ENCODE measurements at regions of chr1 and their contacts with region 1.

Region 1: DNA sequence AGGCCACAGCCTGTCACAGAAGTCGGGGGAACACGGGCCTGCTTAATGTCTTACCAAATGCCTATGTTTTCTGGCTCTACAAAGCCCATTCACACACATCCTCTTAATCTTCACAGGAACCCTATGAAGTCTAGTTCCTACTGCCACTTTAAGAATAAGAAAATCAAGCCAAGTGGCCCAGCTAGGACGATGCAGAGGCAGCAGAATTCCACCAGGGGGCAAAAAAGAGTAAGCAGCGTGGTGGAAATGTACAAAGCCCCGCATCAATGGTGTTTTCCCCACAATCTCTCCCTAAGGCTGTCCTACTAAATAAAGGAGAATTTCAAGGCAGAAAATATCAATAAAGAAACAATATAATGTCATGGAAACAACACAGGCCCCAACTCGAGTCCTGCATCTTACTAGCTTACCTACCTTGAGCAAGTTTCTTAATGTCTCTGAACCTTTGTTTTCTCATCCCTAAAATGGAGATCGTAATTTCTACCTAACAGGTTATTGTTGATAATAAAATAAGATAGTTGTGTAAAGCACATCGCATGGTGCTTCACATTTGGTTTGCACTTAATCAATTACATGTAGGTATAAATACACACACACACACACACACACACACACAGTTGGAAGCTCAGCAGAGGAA is 21.4 kb downstream of the SEC16B start:
- DNase-seq: peak; percentile 58
- H3K4me3 ChIP-seq: no peak overlapping the region
- H3K27ac ChIP-seq: no peak overlapping the region
- H3K4me1 ChIP-seq: peaks cover 9% of the 10 kb centered on the region
- H3K27me3 ChIP-seq: no peaks in the 10 kb centered on the region
- CTCF ChIP-seq: peak; percentile 94 to 96

Region 2: DNA sequence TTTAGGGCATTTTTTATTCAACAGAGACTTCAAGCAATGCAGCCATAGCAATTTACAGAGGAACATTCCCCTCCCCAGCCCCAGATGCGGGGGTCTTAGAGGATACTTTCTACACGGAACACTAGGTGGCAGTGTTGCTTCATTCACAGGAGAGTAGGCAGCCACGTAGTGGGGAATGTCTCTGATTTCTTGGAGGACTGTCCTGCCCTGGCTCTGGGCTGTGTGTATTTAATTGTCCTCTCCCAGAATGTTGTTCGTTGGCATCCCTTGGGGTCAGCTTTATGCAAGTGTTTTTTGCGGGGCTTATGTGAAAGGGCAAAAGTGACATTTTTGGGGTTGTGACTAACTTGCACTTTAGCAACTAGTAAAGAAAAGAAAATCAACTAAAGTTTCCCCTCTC is 1388.6 kb before region 1 on chr1:
- CTCF ChIA-PET with region 1: no interaction called
- dilution Hi-C with region 1: no loop called
- in situ Hi-C with region 1: no loop called
- intact Hi-C with region 1: loop called (anchors 10 kb)
- DNase-seq: peak; percentile 27
- H3K4me3 ChIP-seq: no peak overlapping the region
- H3K27ac ChIP-seq: no peak overlapping the region
- H3K4me1 ChIP-seq: peaks cover 5% of the 10 kb centered on the region
- H3K27me3 ChIP-seq: no peaks in the 10 kb centered on the region
- CTCF ChIP-seq: peak; percentile 66 to 93

Region 3: GRCh38 chr1:177181631-177182291 is 766.7 kb before region 1 on chr1:
- CTCF ChIA-PET with region 1: no interaction called
- dilution Hi-C with region 1: no loop called
- in situ Hi-C with region 1: no loop called
- intact Hi-C with region 1: loop called (anchors 2 kb)
- DNase-seq: peak; percentile 34
- H3K4me3 ChIP-seq: peak overlapping the region in 2 of 3 experiments; percentile 23 to 31
- H3K27ac ChIP-seq: no peak overlapping the region
- H3K4me1 ChIP-seq: peaks cover 5% of the 10 kb centered on the region
- H3K27me3 ChIP-seq: peaks cover 11% of the 10 kb centered on the region
- CTCF ChIP-seq: peak; percentile 64 to 89

Region 4: GRCh38 chr1:177429263-177429662 is 519.2 kb before region 1 on chr1:
- CTCF ChIA-PET with region 1: no interaction called
- dilution Hi-C with region 1: no loop called
- in situ Hi-C with region 1: no loop called
- intact Hi-C with region 1: loop called (anchors 5 kb)
- DNase-seq: no peak
- H3K4me3 ChIP-seq: no peak overlapping the region
- H3K27ac ChIP-seq: no peak overlapping the region
- H3K4me1 ChIP-seq: no peaks in the 10 kb centered on the region
- H3K27me3 ChIP-seq: no peaks in the 10 kb centered on the region
- CTCF ChIP-seq: peak in 1 of 2 donors; percentile 6

Region 5: DNA sequence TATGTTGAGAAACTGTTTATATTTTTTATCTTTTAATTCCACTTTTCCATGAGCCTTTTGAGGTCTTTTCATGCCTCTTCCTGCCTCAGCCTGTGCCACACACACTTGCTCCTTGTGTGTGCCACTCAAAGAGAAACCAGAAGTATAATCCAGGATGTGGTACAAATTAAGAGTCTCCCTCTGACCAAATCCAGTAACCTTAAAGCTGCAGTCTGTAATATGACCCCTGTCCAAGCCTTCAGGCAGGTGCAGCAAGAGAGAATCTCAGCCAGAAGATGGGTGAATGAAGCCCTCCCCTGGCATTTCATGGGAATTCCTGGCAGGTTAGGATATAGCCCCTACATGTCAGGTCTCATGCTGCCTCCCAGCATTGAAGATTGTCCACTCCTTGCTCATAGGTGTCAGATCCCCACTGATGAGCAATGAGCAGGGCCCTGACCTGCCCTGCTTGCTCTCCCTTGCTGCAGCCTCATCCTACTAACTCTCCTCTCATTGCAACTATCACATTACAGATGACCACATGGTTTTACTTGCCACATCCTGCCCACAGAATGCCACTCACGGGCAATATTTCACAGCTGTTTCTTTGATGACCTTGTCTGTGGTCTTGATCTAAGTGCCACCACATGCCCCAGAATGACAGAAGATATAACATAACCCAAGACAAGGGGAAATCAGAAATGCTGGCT is 147.9 kb before region 1 on chr1:
- CTCF ChIA-PET with region 1: no interaction called
- dilution Hi-C with region 1: no loop called
- in situ Hi-C with region 1: no loop called
- intact Hi-C with region 1: loop called (anchors 2 kb)
- DNase-seq: peak; percentile 86
- H3K4me3 ChIP-seq: no peak overlapping the region
- H3K27ac ChIP-seq: no peak overlapping the region
- H3K4me1 ChIP-seq: peaks cover 22% of the 10 kb centered on the region
- H3K27me3 ChIP-seq: no peaks in the 10 kb centered on the region
- CTCF ChIP-seq: no peak

Region 6: DNA sequence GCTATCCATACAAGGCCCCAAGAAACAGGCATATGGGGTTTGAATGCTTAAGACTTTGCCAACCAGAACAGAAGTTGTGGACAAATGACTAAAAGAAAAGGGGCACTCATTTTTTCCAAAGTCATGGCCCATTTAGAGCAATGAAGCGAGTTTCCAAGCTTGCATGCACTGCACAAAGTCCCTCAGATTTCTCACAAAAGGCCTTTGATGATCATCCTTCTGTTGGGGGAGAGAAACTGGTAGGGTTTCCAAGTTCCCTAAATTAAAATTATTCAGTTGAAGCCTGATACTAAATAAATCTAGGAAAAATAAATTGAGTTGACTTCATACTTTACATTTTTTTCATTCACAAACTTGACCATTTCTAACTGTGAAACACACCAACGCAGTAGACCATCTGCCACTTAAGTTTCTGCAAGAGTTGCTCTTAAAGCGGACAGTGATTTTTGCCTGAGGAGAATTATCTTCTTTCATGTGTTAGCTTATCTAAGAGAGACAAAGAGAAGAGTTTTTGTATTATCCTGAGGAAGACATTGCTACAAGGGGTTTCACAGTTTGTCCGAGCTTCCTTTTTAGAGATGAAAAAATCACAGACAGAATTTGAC is 117.8 kb before region 1 on chr1:
- CTCF ChIA-PET with region 1: no interaction called
- dilution Hi-C with region 1: no loop called
- in situ Hi-C with region 1: no loop called
- intact Hi-C with region 1: no loop called
- DNase-seq: no peak
- H3K4me3 ChIP-seq: no peak overlapping the region
- H3K27ac ChIP-seq: no peak overlapping the region
- H3K4me1 ChIP-seq: no peaks in the 10 kb centered on the region
- H3K27me3 ChIP-seq: no peaks in the 10 kb centered on the region
- CTCF ChIP-seq: no peak

Region 7: GRCh38 chr1:178093205-178093957 is 144.9 kb after region 1 on chr1:
- CTCF ChIA-PET with region 1: no interaction called
- dilution Hi-C with region 1: no loop called
- in situ Hi-C with region 1: no loop called
- intact Hi-C with region 1: no loop called
- DNase-seq: peak; percentile 95
- H3K4me3 ChIP-seq: peak overlapping the region; percentile 85 to 99 (median 87)
- H3K27ac ChIP-seq: peak overlapping the region; percentile 79
- H3K4me1 ChIP-seq: peaks cover 31% of the 10 kb centered on the region
- H3K27me3 ChIP-seq: no peaks in the 10 kb centered on the region
- CTCF ChIP-seq: peak in 1 of 2 donors; percentile 18

Region 8: DNA sequence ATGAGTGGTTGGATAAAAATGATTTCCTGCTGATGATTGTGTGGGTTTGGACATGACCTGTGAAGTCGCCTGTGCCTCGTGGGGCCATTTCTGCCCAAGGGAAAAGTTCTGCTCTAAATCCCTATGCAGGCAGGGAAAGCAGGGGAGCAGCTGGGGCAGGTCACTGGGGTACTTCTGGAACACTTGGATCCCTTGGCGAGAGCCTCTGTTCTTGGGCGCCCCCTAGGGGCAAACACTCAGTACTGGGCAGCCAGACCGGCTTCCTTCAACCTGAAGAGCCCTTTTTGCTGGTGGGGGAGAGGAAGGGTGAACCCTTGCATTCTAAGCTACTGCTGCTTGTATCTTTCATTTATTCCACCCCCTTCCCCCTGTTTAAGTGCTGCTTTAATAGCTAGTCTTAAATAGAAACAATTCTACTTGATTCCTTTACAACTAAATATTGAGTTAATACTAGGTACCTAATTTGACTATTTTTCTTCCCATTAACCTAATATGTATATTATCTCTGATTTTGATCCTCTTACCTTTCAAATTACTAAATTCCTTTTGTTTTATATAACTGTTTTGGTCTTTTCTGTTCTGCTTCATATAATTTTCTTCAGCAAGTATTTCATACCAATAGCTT is 553.4 kb after region 1 on chr1:
- CTCF ChIA-PET with region 1: no interaction called
- dilution Hi-C with region 1: no loop called
- in situ Hi-C with region 1: loop called in 1 of 2 experiments (anchors 25 kb)
- intact Hi-C with region 1: loop called (anchors 1 kb)
- DNase-seq: peak; percentile 43
- H3K4me3 ChIP-seq: no peak overlapping the region
- H3K27ac ChIP-seq: no peak overlapping the region
- H3K4me1 ChIP-seq: no peaks in the 10 kb centered on the region
- H3K27me3 ChIP-seq: no peaks in the 10 kb centered on the region
- CTCF ChIP-seq: peak; percentile 95 to 98

Region 9: DNA sequence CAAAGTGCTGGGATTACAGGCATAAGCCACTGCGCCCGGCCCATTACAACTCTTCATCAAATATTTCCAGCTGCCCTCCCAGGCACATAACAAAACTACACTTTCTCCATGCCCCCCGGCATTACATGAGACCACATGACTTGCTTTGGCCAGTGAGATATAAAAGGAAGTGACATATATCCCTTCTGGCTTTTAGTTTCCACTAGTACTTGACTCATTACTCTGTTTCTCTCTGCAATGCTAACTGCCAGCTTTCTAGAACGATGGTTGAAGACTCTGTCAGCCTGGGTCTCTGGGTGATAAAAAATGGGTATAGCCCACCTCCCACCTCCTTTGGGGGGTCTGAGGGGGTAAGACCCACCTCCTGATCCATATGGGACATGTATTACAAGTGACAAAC is 1256.8 kb after region 1 on chr1:
- CTCF ChIA-PET with region 1: no interaction called
- dilution Hi-C with region 1: no loop called
- in situ Hi-C with region 1: no loop called
- intact Hi-C with region 1: no loop called
- DNase-seq: no peak
- H3K4me3 ChIP-seq: no peak overlapping the region
- H3K27ac ChIP-seq: no peak overlapping the region
- H3K4me1 ChIP-seq: no peaks in the 10 kb centered on the region
- H3K27me3 ChIP-seq: no peaks in the 10 kb centered on the region
- CTCF ChIP-seq: no peak

Measured in mammary epithelial cell (primary cell).